Activated CD4-positive, alpha-beta T cell treated with anti-CD3 and anti-CD28 coated beads for 36 hours (primary cell): ENCODE measurements at regions of chr5 and their contacts with region 1.

Region 1: GRCh38 chr5:170100066-170100943 is 5.4 kb upstream of the FOXI1 start:
- DNase-seq: peak; percentile 85
- ATAC-seq: peak; percentile 61
- H3K4me3 Mint-ChIP-seq: no peak overlapping the region
- H3K27ac Mint-ChIP-seq: no peak overlapping the region
- H3K4me1 Mint-ChIP-seq: no peaks in the 10 kb centered on the region
- H3K27me3 Mint-ChIP-seq: peaks cover 2% of the 10 kb centered on the region

Region 2: DNA sequence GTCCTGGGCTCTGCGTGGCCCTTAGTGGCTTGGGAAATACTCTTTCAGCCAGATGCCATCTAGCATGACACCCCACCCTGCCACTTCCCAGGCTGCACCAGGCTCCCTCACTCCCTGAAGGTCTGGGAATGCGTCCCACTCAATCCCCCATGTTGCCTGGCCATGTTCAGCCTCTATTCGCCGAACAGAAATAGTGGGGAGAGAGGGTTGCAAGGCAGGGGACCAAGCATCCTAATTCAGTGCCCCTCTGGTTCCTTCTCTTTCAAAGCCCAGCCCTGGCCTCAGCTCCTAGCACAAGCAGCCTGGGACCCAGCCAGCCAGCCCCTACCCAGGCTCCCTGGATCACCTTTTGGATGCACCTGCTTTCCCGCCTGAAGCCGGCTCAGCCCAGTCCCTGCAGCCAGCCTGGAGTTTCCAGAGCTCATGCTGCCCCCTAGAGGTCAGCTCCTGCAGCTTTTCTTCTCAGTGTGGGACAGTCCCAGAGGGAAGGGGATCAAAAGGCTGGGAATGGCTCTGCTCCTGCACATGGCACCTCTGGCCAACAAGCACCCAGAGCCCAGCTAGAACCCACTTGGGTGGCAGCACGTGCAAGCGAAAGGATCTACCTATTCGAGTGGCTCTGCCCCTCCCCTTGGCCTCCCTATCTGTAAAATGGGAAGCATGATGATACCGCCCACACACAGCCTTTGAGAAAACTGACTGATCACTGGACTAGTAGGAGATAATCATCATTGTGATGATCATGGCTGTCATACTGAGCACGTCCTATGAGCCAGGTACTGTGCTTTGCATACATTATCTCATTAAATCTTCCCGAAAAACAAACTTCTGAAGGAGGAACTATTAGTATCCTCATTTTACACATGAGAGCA is 83.7 kb after region 1 on chr5:
- CTCF ChIA-PET with region 1: interaction called, 5 read pairs
- POLR2A ChIA-PET with region 1: no interaction called
- intact Hi-C with region 1: loop called (anchors 1 kb)
- DNase-seq: peak; percentile 75
- ATAC-seq: peak; percentile 88
- H3K4me3 Mint-ChIP-seq: no peak overlapping the region
- H3K27ac Mint-ChIP-seq: no peak overlapping the region
- H3K4me1 Mint-ChIP-seq: peaks cover 2% of the 10 kb centered on the region
- H3K27me3 Mint-ChIP-seq: no peaks in the 10 kb centered on the region

Region 3: DNA sequence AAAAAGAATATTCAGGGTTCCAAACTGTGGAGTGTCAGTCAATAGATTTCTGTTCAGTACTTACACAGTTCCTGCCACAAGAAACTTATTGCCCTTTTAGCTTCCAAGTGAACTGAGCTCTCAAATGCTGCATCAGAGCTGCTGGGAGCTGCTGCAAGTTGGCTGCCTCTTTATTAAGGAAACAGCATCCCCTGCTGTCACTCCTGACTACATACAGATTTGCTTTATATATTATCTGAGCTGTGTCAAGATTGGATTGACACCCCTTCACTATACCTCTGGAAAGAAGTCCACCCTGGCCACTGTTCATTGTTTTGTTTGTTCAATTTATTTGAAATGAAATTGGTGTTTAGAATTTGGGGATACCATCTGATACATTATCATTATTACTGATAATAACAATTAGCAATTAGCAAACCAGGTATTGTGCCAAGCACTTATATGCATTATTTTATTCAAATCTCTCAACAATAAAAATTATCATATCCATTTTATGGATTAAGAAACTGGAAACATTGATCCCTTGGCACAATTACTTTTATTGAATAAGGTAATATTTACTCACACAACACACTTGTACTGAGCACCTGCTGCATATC is 116.1 kb after region 1 on chr5:
- CTCF ChIA-PET with region 1: interaction called, 14 read pairs
- POLR2A ChIA-PET with region 1: no interaction called
- intact Hi-C with region 1: loop called (anchors 1 to 2 kb)
- DNase-seq: no peak
- ATAC-seq: no peak
- H3K4me3 Mint-ChIP-seq: no peak overlapping the region
- H3K27ac Mint-ChIP-seq: no peak overlapping the region
- H3K4me1 Mint-ChIP-seq: no peaks in the 10 kb centered on the region
- H3K27me3 Mint-ChIP-seq: peaks cover 2% of the 10 kb centered on the region

Region 4: DNA sequence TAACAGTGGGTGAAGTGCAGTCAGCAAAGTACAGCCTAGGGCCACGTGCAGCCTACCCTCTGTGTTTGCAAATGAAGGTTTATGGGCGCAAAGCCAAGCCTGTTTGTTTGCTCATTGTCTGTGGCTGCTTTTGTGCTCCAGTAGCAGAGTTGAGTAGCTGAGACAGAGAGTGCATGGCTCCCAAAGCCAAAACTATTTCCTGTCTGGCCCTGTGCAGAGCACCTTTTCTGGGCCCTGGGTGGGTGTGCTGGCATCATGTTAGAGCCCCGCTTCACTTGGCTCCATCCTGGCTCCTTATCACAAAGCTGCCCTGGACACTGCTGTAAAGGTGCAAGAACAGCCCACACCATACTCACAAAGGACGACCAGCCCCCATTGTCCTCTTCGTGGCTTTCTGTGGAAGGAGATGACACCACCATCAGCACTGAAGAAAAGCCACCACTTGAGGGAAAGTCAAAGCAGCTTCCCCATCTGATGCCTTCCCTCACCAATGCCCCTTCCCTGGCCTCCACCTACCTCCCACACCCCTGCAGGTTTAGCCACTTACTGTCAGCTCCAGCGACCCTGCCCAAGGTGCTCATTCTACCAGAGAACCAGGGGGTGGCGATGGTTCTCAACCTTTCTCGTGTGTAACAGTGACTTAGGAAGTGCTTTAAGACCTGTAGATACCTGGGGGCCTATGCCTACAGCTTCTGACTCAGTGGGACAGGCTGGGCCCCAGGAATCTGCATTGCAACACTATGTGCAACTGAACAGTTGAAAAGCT is 173.8 kb after region 1 on chr5:
- CTCF ChIA-PET with region 1: no interaction called
- POLR2A ChIA-PET with region 1: no interaction called
- intact Hi-C with region 1: no loop called
- DNase-seq: peak; percentile 81
- ATAC-seq: peak; percentile 16
- H3K4me3 Mint-ChIP-seq: peak overlapping the region; percentile 45
- H3K27ac Mint-ChIP-seq: peak overlapping the region; percentile 92
- H3K4me1 Mint-ChIP-seq: peaks cover 92% of the 10 kb centered on the region
- H3K27me3 Mint-ChIP-seq: no peaks in the 10 kb centered on the region

Region 5: DNA sequence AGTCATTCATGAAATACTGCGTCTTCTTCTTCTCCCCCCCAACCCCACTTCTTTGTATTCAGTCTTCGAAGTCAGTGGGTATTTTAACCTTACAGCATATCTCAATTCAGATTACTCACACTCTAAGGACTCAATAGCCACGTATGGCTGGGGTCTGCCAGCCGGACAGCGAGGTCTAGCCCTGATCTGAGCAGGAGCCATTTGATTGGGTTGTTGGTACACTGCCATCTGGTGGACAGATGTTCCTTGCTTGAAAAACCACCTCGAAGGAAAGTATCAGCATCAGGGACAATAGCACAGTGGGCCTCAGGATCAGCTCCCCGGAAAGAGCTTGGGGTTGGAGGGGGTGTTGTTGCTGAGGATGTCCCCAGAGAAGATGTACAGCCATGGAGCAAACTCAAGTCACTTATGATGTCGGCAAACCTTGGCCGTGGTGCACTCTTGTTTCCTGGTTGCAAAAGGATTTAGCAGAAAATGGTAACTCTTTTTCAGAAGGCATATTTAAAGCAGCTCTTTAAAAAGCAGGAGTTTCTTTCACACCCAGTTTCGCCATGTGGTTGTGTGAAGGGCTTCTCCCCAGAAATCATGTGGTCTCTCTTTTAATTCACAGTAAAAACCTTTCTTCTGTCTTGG is 320.6 kb after region 1 on chr5:
- CTCF ChIA-PET with region 1: interaction called, 6 read pairs
- POLR2A ChIA-PET with region 1: no interaction called
- intact Hi-C with region 1: loop called (anchors 1 to 2 kb)
- DNase-seq: peak; percentile 68
- ATAC-seq: peak; percentile 53
- H3K4me3 Mint-ChIP-seq: no peak overlapping the region
- H3K27ac Mint-ChIP-seq: no peak overlapping the region
- H3K4me1 Mint-ChIP-seq: peaks cover 11% of the 10 kb centered on the region
- H3K27me3 Mint-ChIP-seq: no peaks in the 10 kb centered on the region

Region 6: DNA sequence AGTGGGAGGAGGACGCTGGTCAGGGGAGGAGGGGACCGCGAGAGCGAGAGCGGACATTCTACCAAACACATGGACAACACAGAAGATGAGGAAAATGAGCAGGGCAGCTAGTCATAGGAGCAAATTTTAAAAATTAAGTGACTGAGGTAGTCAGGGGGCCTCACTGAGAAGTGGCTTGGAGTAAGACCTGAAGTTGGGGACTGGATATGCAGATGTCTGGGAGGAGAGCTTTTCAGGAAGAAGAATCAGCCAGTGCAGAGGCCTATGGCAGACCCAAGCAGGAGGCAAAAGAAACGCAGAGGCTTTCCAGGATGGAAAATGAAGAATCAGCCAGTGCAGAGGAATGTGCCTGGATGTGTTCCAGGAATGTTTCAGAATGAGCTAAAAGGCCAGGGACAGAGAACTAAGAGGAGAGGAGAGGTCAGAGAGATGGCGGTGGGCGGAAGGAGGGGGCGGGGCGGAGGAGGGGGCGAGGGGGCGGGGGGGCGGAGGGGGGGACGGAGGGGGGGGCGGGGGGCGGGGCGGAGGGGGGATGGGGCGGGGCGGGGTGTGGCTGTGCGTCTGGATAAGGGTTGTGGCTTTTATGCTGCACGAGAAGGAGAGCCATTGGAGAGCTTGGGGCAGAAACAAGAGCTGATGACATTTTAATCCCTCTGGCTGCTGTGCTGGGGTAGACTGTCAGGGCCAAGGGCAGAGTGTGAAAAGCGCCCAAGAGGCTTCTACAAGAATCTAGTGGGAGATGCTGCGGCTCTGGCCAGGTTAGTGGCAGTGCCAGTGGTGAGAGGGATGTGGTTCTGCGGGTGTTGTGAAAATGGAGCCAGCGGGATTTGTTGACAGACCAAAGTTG is 533.2 kb after region 1 on chr5:
- CTCF ChIA-PET with region 1: interaction called, 3 read pairs
- POLR2A ChIA-PET with region 1: no interaction called
- intact Hi-C with region 1: loop called (anchors 5 kb)
- DNase-seq: peak; percentile 19
- ATAC-seq: peak; percentile 30
- H3K4me3 Mint-ChIP-seq: peak overlapping the region; percentile 33
- H3K27ac Mint-ChIP-seq: no peak overlapping the region
- H3K4me1 Mint-ChIP-seq: peaks cover 15% of the 10 kb centered on the region
- H3K27me3 Mint-ChIP-seq: peaks cover 7% of the 10 kb centered on the region